ENCODE measurements at regions of chr7 and their contacts with region 1.

Region 1: DNA sequence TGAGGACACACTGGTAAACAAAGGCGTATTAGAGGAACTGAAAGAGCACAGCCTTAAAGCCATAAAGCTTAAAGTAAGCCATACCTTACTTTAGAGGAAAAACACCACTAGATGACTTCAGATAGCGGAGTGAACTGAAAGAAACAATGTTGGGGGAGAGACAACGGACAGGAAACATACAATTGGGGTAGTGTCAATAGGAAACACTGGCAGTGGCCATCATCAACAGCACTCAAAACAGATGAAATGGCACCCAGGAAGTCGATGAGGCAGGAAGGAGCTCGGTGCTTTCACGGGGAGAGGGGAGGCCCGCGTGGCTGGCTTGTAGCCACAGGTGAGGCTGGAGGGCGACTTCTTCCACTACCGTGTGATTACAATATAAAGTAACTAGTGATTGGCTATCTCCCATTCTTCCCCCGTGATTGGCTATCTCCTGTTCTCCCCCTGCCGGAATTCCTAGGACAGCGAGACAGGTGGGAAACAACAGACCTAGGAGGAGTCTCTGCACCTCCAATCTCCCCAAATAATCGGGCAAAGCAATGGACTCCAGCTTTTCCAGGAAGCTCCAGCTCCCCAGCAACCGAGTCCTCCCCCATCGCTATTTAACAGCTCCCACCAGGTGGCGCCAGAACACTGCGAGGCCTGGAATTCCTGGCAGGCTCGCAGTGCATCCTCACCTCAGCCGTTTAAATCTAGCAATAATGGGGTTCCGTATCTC is 2.4 kb upstream of the TAS2R38 start:
- DNase-seq: peak; percentile 44 to 86
- H3K4me3 ChIP-seq: no peak overlapping the region
- H3K27ac ChIP-seq: no peak overlapping the region
- H3K4me1 ChIP-seq: no peaks in the 10 kb centered on the region; the same call in 1 of the 2 replicates
- H3K27me3 ChIP-seq: no peaks in the 10 kb centered on the region
- CTCF ChIP-seq: peak; percentile 96

Region 2: DNA sequence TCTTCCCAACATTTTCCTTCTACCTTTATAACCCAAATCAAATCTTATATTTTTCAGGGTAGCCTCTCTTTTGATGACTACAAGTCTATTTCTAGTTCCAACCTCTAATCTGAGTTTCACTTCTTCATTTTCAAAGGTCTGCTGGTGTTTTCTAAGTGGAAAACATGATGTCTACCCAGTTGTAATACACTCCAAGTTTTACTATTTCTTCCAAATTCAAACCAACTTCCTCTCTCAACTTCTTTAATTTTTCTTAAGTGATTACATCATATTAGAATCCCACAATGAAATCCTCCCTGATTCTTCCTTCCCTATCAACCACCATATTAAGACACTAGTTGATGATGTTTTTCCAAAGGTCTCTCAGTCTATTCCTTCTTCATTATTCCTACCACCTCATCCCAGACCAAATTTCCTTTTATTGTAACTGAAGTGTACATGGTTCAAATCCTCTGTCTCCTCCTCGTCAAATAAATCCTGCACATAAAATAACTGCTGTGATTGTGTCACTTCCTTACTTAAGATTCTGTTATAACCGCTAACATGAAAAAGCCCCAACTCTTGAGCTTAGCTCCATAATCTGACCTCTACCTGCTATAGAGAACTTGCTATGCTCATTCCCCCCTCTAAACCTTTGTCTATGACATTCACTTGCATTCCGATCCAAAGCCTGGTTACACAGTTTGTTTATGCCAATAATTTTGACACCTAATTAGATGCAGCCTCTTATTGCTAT is 15.1 kb before region 1 on chr7:
- CTCF ChIA-PET with region 1: no interaction called
- POLR2A ChIA-PET with region 1: no interaction called
- intact Hi-C with region 1: no loop called
- DNase-seq: no peak
- H3K4me3 ChIP-seq: no peak overlapping the region
- H3K27ac ChIP-seq: no peak overlapping the region
- H3K4me1 ChIP-seq: no peaks in the 10 kb centered on the region
- H3K27me3 ChIP-seq: no peaks in the 10 kb centered on the region
- CTCF ChIP-seq: no peak

Region 3: GRCh38 chr7:142030294-142030693 is 54.3 kb after region 1 on chr7:
- CTCF ChIA-PET with region 1: interaction called, 4 read pairs
- POLR2A ChIA-PET with region 1: no interaction called
- intact Hi-C with region 1: loop called (anchors 1 kb)
- DNase-seq: peak in 1 of 2 experiments; percentile 60
- H3K4me3 ChIP-seq: no peak overlapping the region
- H3K27ac ChIP-seq: no peak overlapping the region
- H3K4me1 ChIP-seq: peaks cover 15% of the 10 kb centered on the region
- H3K27me3 ChIP-seq: no peaks in the 10 kb centered on the region
- CTCF ChIP-seq: peak; percentile 32; the same call in 1 of the 2 replicates

Region 4: GRCh38 chr7:142153400-142153799 is 177.4 kb after region 1 on chr7:
- CTCF ChIA-PET with region 1: interaction called, 4 read pairs
- POLR2A ChIA-PET with region 1: no interaction called
- intact Hi-C with region 1: loop called (anchors 1 kb)
- DNase-seq: peak in 1 of 2 experiments; percentile 19
- H3K4me3 ChIP-seq: no peak overlapping the region
- H3K27ac ChIP-seq: no peak overlapping the region
- H3K4me1 ChIP-seq: no peaks in the 10 kb centered on the region
- H3K27me3 ChIP-seq: no peaks in the 10 kb centered on the region
- CTCF ChIP-seq: peak; percentile 59

Region 5: DNA sequence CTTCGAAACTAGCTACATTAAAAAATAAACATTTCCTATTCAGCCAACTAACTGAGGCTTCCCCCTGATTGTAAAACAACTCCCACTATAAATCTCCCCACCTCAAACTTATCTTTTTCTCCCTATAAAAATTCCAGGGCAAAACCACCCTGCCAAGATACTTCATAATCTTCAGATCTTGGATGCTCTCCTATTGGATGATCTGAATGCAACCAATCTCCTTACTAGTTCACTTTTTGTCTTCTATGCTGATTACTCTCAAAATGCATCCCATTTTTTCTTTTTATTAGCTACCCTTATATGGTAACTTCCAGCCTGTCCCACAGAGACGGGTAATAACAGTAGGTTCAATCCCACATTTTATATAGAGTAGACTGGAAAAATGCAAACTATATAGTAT is 296.9 kb after region 1 on chr7:
- CTCF ChIA-PET with region 1: no interaction called
- POLR2A ChIA-PET with region 1: no interaction called
- intact Hi-C with region 1: no loop called
- DNase-seq: no peak
- H3K4me3 ChIP-seq: no peak overlapping the region
- H3K27ac ChIP-seq: no peak overlapping the region
- H3K4me1 ChIP-seq: no peaks in the 10 kb centered on the region
- H3K27me3 ChIP-seq: no peaks in the 10 kb centered on the region
- CTCF ChIP-seq: no peak

Region 6: DNA sequence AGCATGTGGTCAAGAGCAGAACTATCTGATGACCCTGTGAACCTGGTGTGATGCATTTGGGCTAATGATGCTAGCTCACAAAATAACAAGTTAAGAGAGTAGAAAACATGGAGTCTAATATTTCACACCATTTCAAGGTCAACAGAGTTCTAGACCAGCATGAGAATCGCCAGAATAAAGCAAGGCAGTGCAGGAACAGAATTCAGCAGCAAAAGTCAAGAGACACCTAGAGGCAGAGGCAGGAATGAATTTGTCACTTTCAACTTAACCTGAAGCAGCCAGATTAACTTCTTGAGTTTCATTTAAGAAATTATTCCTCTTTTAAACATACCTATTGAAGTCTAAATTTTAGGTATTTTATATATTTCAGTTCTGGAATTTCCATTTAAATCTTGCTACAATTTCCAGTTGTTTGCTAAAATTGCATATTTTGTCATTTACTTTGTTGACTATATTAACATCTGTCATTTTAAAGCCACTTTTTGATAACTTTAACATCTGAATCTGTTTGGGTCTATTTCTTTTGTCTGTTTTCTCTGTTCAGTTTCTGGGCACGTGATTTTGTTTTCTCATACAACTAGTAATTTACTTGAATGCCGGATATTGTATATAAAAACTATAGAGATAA is 326.1 kb after region 1 on chr7:
- CTCF ChIA-PET with region 1: no interaction called
- POLR2A ChIA-PET with region 1: no interaction called
- intact Hi-C with region 1: loop called (anchors 1 kb)
- DNase-seq: no peak
- H3K4me3 ChIP-seq: no peak overlapping the region
- H3K27ac ChIP-seq: no peak overlapping the region
- H3K4me1 ChIP-seq: no peaks in the 10 kb centered on the region
- H3K27me3 ChIP-seq: no peaks in the 10 kb centered on the region
- CTCF ChIP-seq: 0 out of 2 replicates have a peak, but pooled peaks have one; percentile 35